Calu3 (cell line): ENCODE measurements at regions of chr12 and their contacts with region 1.

Region 1: GRCh38 chr12:98490501-98491453 is 24.6 kb upstream of the TMPO start:
- DNase-seq: peak; percentile 92
- H3K4me3 Mint-ChIP-seq: peak overlapping the region; percentile 28
- H3K27ac Mint-ChIP-seq: peak overlapping the region; percentile 85
- H3K4me1 Mint-ChIP-seq: peaks cover 31% of the 10 kb centered on the region
- H3K27me3 Mint-ChIP-seq: no peaks in the 10 kb centered on the region
- CTCF ChIP-seq: peak; percentile 80

Region 2: GRCh38 chr12:98424726-98425401 is 65.9 kb before region 1 on chr12:
- CTCF ChIA-PET with region 1: interaction called, 11 read pairs
- intact Hi-C with region 1: loop called (anchors 1 kb)
- DNase-seq: peak; percentile 83
- H3K4me3 Mint-ChIP-seq: no peak overlapping the region
- H3K27ac Mint-ChIP-seq: no peak overlapping the region
- H3K4me1 Mint-ChIP-seq: peaks cover 24% of the 10 kb centered on the region
- H3K27me3 Mint-ChIP-seq: no peaks in the 10 kb centered on the region
- CTCF ChIP-seq: peak; percentile 59

Region 3: GRCh38 chr12:98503592-98504367 is 13.0 kb after region 1 on chr12:
- CTCF ChIA-PET with region 1: interaction called, 18 read pairs
- intact Hi-C with region 1: loop called (anchors 1 kb)
- DNase-seq: peak; percentile 96
- H3K4me3 Mint-ChIP-seq: peak overlapping the region; percentile 70
- H3K27ac Mint-ChIP-seq: peak overlapping the region; percentile 100
- H3K4me1 Mint-ChIP-seq: peaks cover 43% of the 10 kb centered on the region
- H3K27me3 Mint-ChIP-seq: peaks cover 15% of the 10 kb centered on the region
- CTCF ChIP-seq: no peak

Region 4: GRCh38 chr12:98516184-98516873 is 25.6 kb after region 1 on chr12:
- CTCF ChIA-PET with region 1: interaction called, 10 read pairs
- intact Hi-C with region 1: loop called (anchors 1 kb)
- DNase-seq: peak; percentile 86
- H3K4me3 Mint-ChIP-seq: peak overlapping the region; percentile 65
- H3K27ac Mint-ChIP-seq: peak overlapping the region; percentile 96
- H3K4me1 Mint-ChIP-seq: peaks cover 27% of the 10 kb centered on the region
- H3K27me3 Mint-ChIP-seq: no peaks in the 10 kb centered on the region
- CTCF ChIP-seq: no peak

Region 5: GRCh38 chr12:98532681-98533304 is 42.0 kb after region 1 on chr12:
- CTCF ChIA-PET with region 1: interaction called, 9 read pairs
- intact Hi-C with region 1: loop called (anchors 5 kb)
- DNase-seq: peak; percentile 66
- H3K4me3 Mint-ChIP-seq: no peak overlapping the region
- H3K27ac Mint-ChIP-seq: no peak overlapping the region
- H3K4me1 Mint-ChIP-seq: peaks cover 5% of the 10 kb centered on the region
- H3K27me3 Mint-ChIP-seq: no peaks in the 10 kb centered on the region
- CTCF ChIP-seq: peak; percentile 63